ENCODE measurements at regions of chr12 and their contacts with region 1.

Region 1: GRCh38 chr12:123049398-123050240 is 69.1 kb downstream of the ARL6IP4 start:
- DNase-seq: peak in 1 of 3 donors; percentile 12
- ATAC-seq: peak; percentile 10
- H3K4me3 ChIP-seq: no peak overlapping the region
- H3K4me1 ChIP-seq: no peaks in the 10 kb centered on the region
- CTCF ChIP-seq: no peak

Region 2: GRCh38 chr12:123150744-123151456 is 101.3 kb after region 1 on chr12 and contains the start of gene PITPNM2:
- intact Hi-C with region 1: loop called (anchors 5 to 10 kb)
- DNase-seq: peak; percentile 68 to 80 (median 74)
- ATAC-seq: peak; percentile 89
- H3K4me3 ChIP-seq: peak within 1 kb of the TSS; percentile 47
- H3K4me1 ChIP-seq: no peaks in the 10 kb centered on the region
- CTCF ChIP-seq: peak; percentile 36
- total RNA-seq, gene PITPNM2: 16.7 to 22.7 (median 20.8) TPM